PC-9 (cell line): ENCODE measurements at regions of chr1 and their contacts with region 1.

Region 1: GRCh38 chr1:86114236-86114635 is 42.3 kb downstream of the COL24A1 start:
- DNase-seq: no peak
- H3K4me3 ChIP-seq: no peak overlapping the region
- H3K27ac ChIP-seq: no peak overlapping the region
- H3K4me1 ChIP-seq: no peaks in the 10 kb centered on the region
- H3K27me3 ChIP-seq: no peaks in the 10 kb centered on the region
- CTCF ChIP-seq: no peak

Region 2: GRCh38 chr1:85962457-85962856 is 151.8 kb before region 1 on chr1:
- CTCF ChIA-PET with region 1: no interaction called
- POLR2A ChIA-PET with region 1: interaction called, 34 read pairs
- intact Hi-C with region 1: no loop called
- DNase-seq: no peak
- H3K4me3 ChIP-seq: no peak overlapping the region
- H3K27ac ChIP-seq: no peak overlapping the region
- H3K4me1 ChIP-seq: no peaks in the 10 kb centered on the region
- H3K27me3 ChIP-seq: no peaks in the 10 kb centered on the region
- CTCF ChIP-seq: no peak

Region 3: GRCh38 chr1:86061551-86061990 is 52.7 kb before region 1 on chr1:
- CTCF ChIA-PET with region 1: no interaction called
- POLR2A ChIA-PET with region 1: no interaction called
- intact Hi-C with region 1: no loop called
- DNase-seq: no peak
- H3K4me3 ChIP-seq: no peak overlapping the region
- H3K27ac ChIP-seq: no peak overlapping the region
- H3K4me1 ChIP-seq: no peaks in the 10 kb centered on the region
- H3K27me3 ChIP-seq: no peaks in the 10 kb centered on the region
- CTCF ChIP-seq: no peak

Region 4: DNA sequence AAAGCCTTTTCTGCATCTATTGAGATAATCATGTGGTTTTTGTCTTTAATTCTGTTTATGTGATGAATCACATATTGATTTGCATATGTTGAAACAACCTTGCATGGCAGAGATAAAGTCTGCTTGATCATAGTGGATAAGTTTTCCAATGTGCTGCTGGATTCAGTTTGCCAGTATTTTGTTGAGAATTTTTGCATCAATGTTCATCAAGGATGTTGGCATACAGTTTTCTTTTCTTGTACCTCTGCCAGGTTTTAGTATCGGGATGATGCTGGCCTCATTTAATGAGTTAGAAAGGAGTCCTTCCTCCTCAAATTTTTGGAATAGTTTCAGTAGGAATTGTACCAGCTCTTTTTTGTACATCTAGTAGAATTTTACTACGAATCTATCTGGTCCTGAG is 12.6 kb before region 1 on chr1:
- CTCF ChIA-PET with region 1: no interaction called
- POLR2A ChIA-PET with region 1: interaction called, 39 read pairs
- intact Hi-C with region 1: no loop called
- DNase-seq: no peak
- H3K4me3 ChIP-seq: no peak overlapping the region
- H3K27ac ChIP-seq: no peak overlapping the region
- H3K4me1 ChIP-seq: peaks cover 8% of the 10 kb centered on the region; the same call in 1 of the 2 replicates
- H3K27me3 ChIP-seq: no peaks in the 10 kb centered on the region
- CTCF ChIP-seq: no peak